Activated CD8-positive, alpha-beta memory T cell treated with anti-CD3 and anti-CD28 coated beads, Interleukin-2, amount 10 ng/mL, durations not matched to agents 7 days and 5 days (primary cell): ENCODE measurements at regions of chr15 and their contacts with region 1.

Region 1: GRCh38 chr15:60358935-60359682 is 38.7 kb downstream of the ANXA2 start:
- DNase-seq: no peak
- ATAC-seq: no peak
- H3K4me3 Mint-ChIP-seq: no peak overlapping the region
- H3K27ac Mint-ChIP-seq: no peak overlapping the region
- H3K4me1 Mint-ChIP-seq: peaks cover 26% of the 10 kb centered on the region
- H3K27me3 Mint-ChIP-seq: no peaks in the 10 kb centered on the region

Region 2: GRCh38 chr15:60374628-60375081 is 15.5 kb after region 1 on chr15:
- CTCF ChIA-PET with region 1: interaction called, 13 read pairs
- DNase-seq: no peak
- ATAC-seq: no peak
- H3K4me3 Mint-ChIP-seq: no peak overlapping the region
- H3K27ac Mint-ChIP-seq: no peak overlapping the region
- H3K4me1 Mint-ChIP-seq: peaks cover 16% of the 10 kb centered on the region
- H3K27me3 Mint-ChIP-seq: no peaks in the 10 kb centered on the region